Transverse colon (tissue), 4 donors: ENCODE measurements at regions of chr17 and their contacts with region 1.

Region 1: GRCh38 chr17:46866325-46866724 is 14.9 kb downstream of the WNT9B start:
- DNase-seq: no peak
- H3K4me3 ChIP-seq: no peak overlapping the region
- H3K27ac ChIP-seq: no peak overlapping the region
- H3K4me1 ChIP-seq: peaks cover 0 to 10% (median 2%) of the 10 kb centered on the region in 4 donors
- H3K27me3 ChIP-seq: no peaks in the 10 kb centered on the region
- CTCF ChIP-seq: no peak
- EP300 ChIP-seq: no peak
- POLR2A ChIP-seq: no peak

Region 2: GRCh38 chr17:46930051-46930450 is 63.7 kb after region 1 on chr17:
- in situ Hi-C with region 1: no loop called
- intact Hi-C with region 1: loop called (anchors 2 kb)
- DNase-seq: no peak
- H3K4me3 ChIP-seq: no peak overlapping the region
- H3K27ac ChIP-seq: no peak overlapping the region
- H3K4me1 ChIP-seq: peaks cover 0 to 36% (median 8%) of the 10 kb centered on the region in 4 donors
- H3K27me3 ChIP-seq: no peaks in the 10 kb centered on the region
- CTCF ChIP-seq: no peak
- EP300 ChIP-seq: no peak
- POLR2A ChIP-seq: no peak